Ascending aorta (tissue), 2 donors: ENCODE measurements at regions of chr2 and their contacts with region 1.

Region 1: GRCh38 chr2:12716282-12717190 is at the start of gene TRIB2:
- DNase-seq: peak; percentile 69 to 95
- H3K4me3 ChIP-seq: peak within 1 kb of the TSS; percentile 80 to 91
- H3K27ac ChIP-seq: peak within 1 kb of the TSS; percentile 92 to 95
- H3K4me1 ChIP-seq: peaks cover 12 to 25% of the 10 kb centered on the region in 2 donors
- H3K27me3 ChIP-seq: no peaks in the 10 kb centered on the region
- CTCF ChIP-seq: peak in 1 of 3 experiments; percentile 3
- total RNA-seq, gene TRIB2: 55.6 TPM

Region 2: GRCh38 chr2:10812362-10813162 is 1904.0 kb before region 1 on chr2 and contains the start of gene PDIA6:
- intact Hi-C with region 1: loop called (anchors 5 kb)
- DNase-seq: peak; percentile 89 to 98
- H3K4me3 ChIP-seq: peak within 1 kb of the TSS; percentile 68 to 74
- H3K27ac ChIP-seq: peak within 1 kb of the TSS; percentile 71 to 81
- H3K4me1 ChIP-seq: peaks cover 0 to 20% of the 10 kb centered on the region in 2 donors
- H3K27me3 ChIP-seq: no peaks in the 10 kb centered on the region
- CTCF ChIP-seq: peak in 1 of 3 experiments; percentile 43
- total RNA-seq, gene PDIA6: 56.4 TPM

Region 3: DNA sequence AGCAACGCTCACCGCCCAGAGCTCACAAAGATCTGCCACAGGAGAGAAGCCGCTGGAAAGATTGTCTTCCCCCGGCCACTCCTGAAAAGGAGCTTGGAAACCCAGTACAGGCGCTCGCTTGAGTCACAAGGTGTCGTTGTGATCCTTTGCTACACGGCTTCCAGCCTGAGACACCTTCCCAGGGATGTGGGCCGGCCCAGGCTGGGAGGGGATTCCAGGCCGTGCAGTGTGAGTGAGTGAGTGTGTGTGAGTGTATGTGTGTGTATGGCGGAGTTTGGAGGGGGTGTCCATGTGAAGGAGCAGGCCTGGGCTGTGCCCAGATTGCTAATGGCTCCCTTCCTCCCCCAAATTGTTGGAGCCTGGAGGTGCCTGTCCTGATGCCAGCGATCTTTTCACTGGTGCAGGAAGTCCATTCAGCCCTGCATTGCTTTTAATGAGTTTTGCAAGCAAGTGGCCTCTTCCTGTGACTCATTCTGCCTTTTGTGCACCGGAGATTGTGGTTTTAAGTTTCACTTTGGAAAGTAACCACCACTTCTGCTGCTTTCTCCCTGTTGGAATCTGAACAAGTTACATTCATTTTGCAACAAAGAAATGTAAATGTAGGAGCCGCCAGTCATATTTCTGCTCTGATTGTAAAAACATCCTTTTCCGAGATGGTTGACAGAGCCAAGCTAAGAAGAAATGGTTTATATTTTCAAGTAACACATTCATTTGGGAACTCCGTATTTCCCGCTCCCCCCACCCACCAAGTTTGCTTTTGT is 886.4 kb before region 1 on chr2:
- intact Hi-C with region 1: loop called (anchors 2 kb)
- DNase-seq: peak; percentile 24 to 82
- H3K4me3 ChIP-seq: peak overlapping the region; percentile 55
- H3K27ac ChIP-seq: peak overlapping the region; percentile 69 to 89
- H3K4me1 ChIP-seq: peaks cover 4 to 17% of the 10 kb centered on the region in 2 donors
- H3K27me3 ChIP-seq: no peaks in the 10 kb centered on the region
- CTCF ChIP-seq: peak in 1 of 3 experiments; percentile 35

Region 4: DNA sequence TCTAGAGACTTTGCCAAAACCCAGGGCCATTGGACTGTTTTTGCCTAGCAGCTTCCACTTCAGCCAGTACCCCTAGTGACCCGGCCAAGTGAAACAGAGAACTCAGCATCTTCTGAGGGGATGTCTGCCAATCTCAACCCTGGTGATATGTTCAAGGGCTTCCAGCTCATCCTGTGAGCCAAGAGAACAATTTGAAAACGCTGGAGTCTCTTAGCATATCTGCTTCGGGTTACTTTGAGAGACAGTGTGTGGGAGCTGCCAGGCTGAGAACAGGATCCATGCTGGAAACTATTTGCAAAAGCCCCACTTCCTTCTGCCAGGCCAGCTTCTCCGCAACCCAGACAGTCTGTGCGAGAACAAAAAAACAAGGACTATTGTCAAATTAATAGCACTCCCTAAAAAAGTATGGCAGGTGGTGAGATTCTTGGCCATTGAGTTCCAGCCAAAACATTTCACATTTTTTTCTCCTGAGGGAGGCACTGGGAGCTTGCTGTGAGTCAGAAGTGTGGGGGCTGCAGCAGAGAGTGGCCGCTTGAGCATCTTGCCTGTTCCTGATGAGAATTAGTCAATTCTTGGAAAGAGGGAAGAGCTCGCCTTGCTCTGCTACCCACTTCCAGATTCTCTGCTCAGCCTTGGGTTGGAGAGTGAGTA is 395.4 kb before region 1 on chr2:
- intact Hi-C with region 1: loop called (anchors 2 kb)
- DNase-seq: peak in 1 of 2 donors; percentile 83
- H3K4me3 ChIP-seq: peak overlapping the region in 1 of 2 donors; percentile 25
- H3K27ac ChIP-seq: peak overlapping the region; percentile 76 to 87
- H3K4me1 ChIP-seq: peaks cover 3 to 15% of the 10 kb centered on the region in 2 donors
- H3K27me3 ChIP-seq: no peaks in the 10 kb centered on the region
- CTCF ChIP-seq: no peak

Region 5: DNA sequence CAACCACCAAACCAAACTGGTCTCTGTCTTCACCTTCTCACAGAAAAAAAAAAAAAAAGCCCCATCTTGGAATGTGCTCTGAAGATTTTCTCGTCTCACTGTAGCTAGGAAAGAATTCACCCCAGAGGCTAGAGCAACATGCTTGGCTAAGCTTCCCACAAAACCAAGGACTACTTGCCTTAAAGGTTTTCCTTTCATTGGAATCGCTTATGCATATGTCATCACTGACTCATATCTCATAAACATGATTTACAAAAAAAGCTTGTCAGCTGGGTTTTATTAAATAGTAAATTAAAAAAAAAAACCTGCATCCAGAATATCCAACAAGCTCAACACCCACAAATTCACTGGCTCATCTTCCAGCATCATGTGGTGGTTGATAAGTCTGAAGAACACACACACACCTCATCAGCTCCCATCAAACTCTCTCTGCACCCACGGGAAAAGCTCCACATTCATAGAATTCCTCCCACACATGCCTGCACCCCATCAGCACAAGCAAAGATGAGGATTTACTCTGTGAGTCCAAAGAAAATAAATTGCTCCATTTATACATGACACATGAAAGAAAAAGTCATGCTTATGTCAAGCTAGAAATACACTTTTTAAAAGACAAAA is 181.8 kb before region 1 on chr2:
- intact Hi-C with region 1: loop called (anchors 2 kb)
- DNase-seq: no peak
- H3K4me3 ChIP-seq: no peak overlapping the region
- H3K27ac ChIP-seq: peak overlapping the region; percentile 31 to 34
- H3K4me1 ChIP-seq: peaks cover 3 to 25% of the 10 kb centered on the region in 2 donors
- H3K27me3 ChIP-seq: no peaks in the 10 kb centered on the region
- CTCF ChIP-seq: no peak

Region 6: DNA sequence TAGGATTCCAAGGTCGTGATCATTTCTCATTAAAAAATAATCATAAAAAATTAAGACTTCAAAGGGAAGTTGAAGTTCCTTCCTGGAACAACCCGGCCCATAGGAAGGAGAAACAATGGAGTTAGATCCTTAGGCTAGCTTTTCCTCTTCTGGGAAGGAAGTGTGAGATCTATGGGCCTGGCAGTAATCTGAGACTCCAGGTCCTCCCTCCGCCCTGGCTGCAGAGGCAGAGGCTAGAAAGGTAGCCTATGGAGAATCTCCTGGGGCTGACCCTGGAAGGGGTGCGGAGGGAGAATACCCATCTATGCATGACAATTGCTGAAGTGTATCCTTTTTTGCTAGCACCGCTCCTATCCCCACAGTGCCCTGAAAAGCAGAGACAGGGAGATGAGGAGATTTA is 38.1 kb after region 1 on chr2:
- intact Hi-C with region 1: no loop called
- DNase-seq: no peak
- H3K4me3 ChIP-seq: no peak overlapping the region
- H3K27ac ChIP-seq: no peak overlapping the region
- H3K4me1 ChIP-seq: no peaks in the 10 kb centered on the region
- H3K27me3 ChIP-seq: no peaks in the 10 kb centered on the region
- CTCF ChIP-seq: no peak

Region 7: GRCh38 chr2:12819103-12819475 is 102.6 kb after region 1 on chr2:
- intact Hi-C with region 1: loop called (anchors 2 kb)
- DNase-seq: peak; percentile 17 to 94
- H3K4me3 ChIP-seq: peak overlapping the region in 1 of 2 donors; percentile 33
- H3K27ac ChIP-seq: peak overlapping the region; percentile 78 to 83
- H3K4me1 ChIP-seq: peaks cover 6 to 10% of the 10 kb centered on the region in 2 donors
- H3K27me3 ChIP-seq: no peaks in the 10 kb centered on the region
- CTCF ChIP-seq: no peak

Region 8: GRCh38 chr2:13000664-13001363 is 284.3 kb after region 1 on chr2:
- intact Hi-C with region 1: loop called (anchors 5 kb)
- DNase-seq: no peak
- H3K4me3 ChIP-seq: peak overlapping the region in 1 of 2 donors; percentile 7
- H3K27ac ChIP-seq: no peak overlapping the region
- H3K4me1 ChIP-seq: no peaks in the 10 kb centered on the region
- H3K27me3 ChIP-seq: no peaks in the 10 kb centered on the region
- CTCF ChIP-seq: no peak